ENCODE measurements at regions of chr18 and their contacts with region 1.

Region 1: GRCh38 chr18:8084160-8084559 is 517.0 kb downstream of the PTPRM start:
- DNase-seq: no peak
- H3K4me3 ChIP-seq: no peak overlapping the region
- H3K27ac ChIP-seq: no peak overlapping the region
- H3K4me1 ChIP-seq: no peaks in the 10 kb centered on the region
- H3K27me3 ChIP-seq: no peaks in the 10 kb centered on the region
- CTCF ChIP-seq: peak; percentile 10

Region 2: GRCh38 chr18:7696780-7697179 is 387.4 kb before region 1 on chr18:
- intact Hi-C with region 1: no loop called
- DNase-seq: no peak
- H3K4me3 ChIP-seq: no peak overlapping the region
- H3K27ac ChIP-seq: no peak overlapping the region
- H3K4me1 ChIP-seq: no peaks in the 10 kb centered on the region
- H3K27me3 ChIP-seq: no peaks in the 10 kb centered on the region
- CTCF ChIP-seq: no peak

Region 3: DNA sequence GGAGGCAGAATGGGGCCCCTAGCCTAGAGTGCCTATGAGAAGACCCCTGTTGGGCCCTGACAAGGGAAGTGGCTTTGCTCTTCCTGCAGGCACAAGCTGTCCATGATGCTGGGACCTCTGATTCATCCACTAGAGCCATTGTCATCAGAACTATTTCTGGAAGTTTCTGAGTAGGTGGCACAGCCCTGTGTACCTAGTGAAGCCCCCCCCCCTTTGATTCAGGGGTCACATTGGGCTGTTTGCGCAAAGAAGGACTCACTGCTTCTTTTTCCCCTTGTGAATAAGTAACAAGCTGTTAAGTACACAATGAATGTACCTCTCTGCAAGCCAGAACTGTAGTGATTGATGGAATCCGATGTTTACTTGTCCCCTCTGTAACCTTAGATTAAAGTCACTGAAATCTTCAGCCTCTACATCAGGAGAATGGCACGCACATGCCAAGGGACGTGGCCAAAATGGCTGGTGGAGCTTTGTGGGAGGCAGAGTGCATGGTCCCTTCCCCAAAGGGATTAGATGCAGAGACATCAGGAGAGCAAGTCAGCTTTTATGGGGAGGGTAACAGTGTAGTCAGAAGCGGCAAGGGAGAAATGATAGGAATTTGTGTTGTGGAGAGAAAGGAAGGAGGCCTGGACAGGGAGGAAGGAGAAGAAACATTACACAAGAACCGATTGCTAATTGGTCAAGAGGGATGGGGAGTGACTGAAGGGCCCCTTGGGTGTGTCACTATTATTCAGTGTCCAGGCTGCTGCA is 257.5 kb after region 1 on chr18:
- intact Hi-C with region 1: no loop called
- DNase-seq: no peak
- H3K4me3 ChIP-seq: no peak overlapping the region
- H3K27ac ChIP-seq: no peak overlapping the region
- H3K4me1 ChIP-seq: peaks cover 0 to 40% (median 14%) of the 10 kb centered on the region in 4 donors
- H3K27me3 ChIP-seq: no peaks in the 10 kb centered on the region
- CTCF ChIP-seq: no peak

Region 4: DNA sequence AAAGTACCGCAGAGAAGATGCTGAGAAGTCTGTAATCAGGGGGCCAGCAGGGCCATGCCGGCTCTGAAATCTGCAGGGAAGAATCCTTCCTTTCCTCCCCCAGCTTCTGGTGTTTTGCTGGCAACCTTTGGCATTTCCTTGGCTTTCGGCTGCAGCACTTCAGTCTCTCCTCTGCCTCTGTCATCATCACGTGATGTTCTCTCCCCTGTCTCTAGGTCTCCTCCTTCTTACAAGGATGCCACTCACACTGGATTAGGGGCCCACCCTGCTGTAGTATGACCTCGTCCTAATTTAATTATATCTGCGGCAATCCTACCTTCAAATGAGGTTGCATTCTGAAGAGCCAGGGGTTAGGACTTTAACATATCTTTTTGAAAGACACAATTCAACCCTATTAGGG is 511.3 kb after region 1 on chr18:
- intact Hi-C with region 1: loop called (anchors 10 kb)
- DNase-seq: no peak
- H3K4me3 ChIP-seq: no peak overlapping the region
- H3K27ac ChIP-seq: no peak overlapping the region
- H3K4me1 ChIP-seq: no peaks in the 10 kb centered on the region
- H3K27me3 ChIP-seq: no peaks in the 10 kb centered on the region
- CTCF ChIP-seq: no peak